ENCODE measurements at regions of chr14 and their contacts with region 1.

Region 1: GRCh38 chr14:70873627-70874026 is 33.6 kb upstream of the PCNX1 start:
- DNase-seq: peak; percentile 50 to 62 (median 59)
- H3K4me3 ChIP-seq: no peak overlapping the region
- H3K27ac ChIP-seq: no peak overlapping the region
- H3K4me1 ChIP-seq: peaks cover 0 to 2% (median 0%) of the 10 kb centered on the region in 4 experiments
- H3K27me3 ChIP-seq: no peaks in the 10 kb centered on the region

Region 2: DNA sequence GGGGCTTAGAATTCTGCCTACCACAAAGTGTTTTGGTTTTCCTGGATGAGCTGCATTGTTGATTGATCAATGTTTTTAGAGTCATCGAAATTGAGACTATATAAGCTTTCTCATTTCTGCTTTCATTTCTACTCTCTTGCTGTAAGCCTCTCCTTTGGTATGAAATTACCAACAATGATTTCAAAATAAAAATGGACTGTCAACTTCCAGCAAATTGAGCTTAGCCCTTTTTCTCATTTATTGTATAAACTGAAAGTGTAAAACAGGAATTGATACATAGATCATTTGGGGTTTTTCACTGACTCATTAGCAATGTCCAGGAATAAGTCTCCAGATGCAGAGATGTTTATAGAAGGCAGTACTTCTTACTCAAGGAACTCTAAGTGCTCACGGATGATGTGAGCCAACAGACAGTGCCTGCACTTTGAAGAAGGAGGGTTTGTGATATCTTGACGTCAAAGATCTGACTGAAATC is 13.6 kb after region 1 on chr14:
- CTCF ChIA-PET with region 1: interaction called, 46 read pairs
- POLR2A ChIA-PET with region 1: no interaction called
- DNase-seq: peak in 2 of 3 donors; percentile 27 to 41
- H3K4me3 ChIP-seq: peak overlapping the region in 6 of 7 experiments; percentile 19 to 65 (median 42)
- H3K27ac ChIP-seq: no peak overlapping the region
- H3K4me1 ChIP-seq: peaks cover 59 to 74% (median 69%) of the 10 kb centered on the region in 4 experiments
- H3K27me3 ChIP-seq: no peaks in the 10 kb centered on the region

Region 3: GRCh38 chr14:70907176-70907995 is 33.8 kb after region 1 on chr14 and contains the start of gene PCNX1:
- CTCF ChIA-PET with region 1: interaction called, 18 read pairs
- POLR2A ChIA-PET with region 1: interaction called, 3 read pairs
- DNase-seq: peak; percentile 86 to 94 (median 93)
- H3K4me3 ChIP-seq: peak within 1 kb of the TSS; percentile 83 to 97 (median 89)
- H3K27ac ChIP-seq: peak within 1 kb of the TSS; percentile 50 to 84
- H3K4me1 ChIP-seq: peaks cover 14 to 26% (median 20%) of the 10 kb centered on the region in 4 experiments
- H3K27me3 ChIP-seq: no peaks in the 10 kb centered on the region

Region 4: DNA sequence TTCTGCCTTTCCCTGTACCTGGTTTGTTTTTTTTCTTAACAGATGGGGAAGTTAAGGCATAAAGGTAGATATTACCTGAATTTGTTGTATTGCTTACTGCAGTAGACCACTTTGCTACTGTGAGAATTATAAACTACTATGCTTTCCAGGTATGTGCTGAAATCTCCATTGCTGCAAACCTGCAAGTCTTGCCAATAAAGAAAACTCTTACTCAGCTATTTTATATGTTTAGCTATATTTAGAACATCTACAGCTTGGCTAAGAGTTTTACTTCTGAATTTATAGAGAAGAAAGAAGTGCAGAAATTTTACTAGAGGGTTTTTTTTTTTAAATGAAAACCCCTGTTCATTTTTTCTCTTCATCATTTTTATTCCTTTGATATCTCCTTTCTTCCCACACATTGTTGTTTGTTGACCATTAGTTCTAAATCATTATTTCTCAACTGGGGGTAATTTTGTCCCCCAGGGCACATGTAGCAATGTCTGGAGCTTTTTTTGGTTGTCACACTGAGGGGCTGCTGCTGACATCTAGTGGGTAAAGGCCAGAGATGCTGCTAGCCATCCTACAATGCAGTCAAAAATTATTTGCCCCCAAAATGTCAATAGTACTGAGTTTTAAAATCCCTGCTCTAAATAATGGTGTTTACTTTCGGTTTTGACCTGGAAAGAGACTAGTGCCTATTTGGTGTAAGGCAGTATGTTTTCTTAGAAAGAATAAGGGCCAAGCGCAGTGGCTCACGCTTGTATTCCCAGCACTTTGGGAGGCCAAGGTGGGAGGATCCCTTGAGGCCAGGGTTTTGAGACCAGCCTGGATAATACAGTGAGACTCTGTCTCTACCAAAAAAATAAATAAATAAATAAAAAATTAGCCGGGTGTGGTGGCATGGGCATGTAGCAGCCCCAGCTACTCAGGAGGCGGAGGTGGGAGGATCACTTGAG is 82.2 kb after region 1 on chr14:
- CTCF ChIA-PET with region 1: interaction called, 44 read pairs
- POLR2A ChIA-PET with region 1: no interaction called
- DNase-seq: peak; percentile 48 to 69 (median 65)
- H3K4me3 ChIP-seq: no peak overlapping the region
- H3K27ac ChIP-seq: no peak overlapping the region
- H3K4me1 ChIP-seq: peaks cover 0 to 4% (median 1%) of the 10 kb centered on the region in 4 experiments
- H3K27me3 ChIP-seq: no peaks in the 10 kb centered on the region

Region 5: GRCh38 chr14:70972107-70972976 is 98.7 kb after region 1 on chr14:
- CTCF ChIA-PET with region 1: interaction called, 12 read pairs
- POLR2A ChIA-PET with region 1: no interaction called
- DNase-seq: peak; percentile 88 to 94 (median 89)
- H3K4me3 ChIP-seq: no peak overlapping the region
- H3K27ac ChIP-seq: no peak overlapping the region
- H3K4me1 ChIP-seq: peaks cover 0 to 9% (median 2%) of the 10 kb centered on the region in 4 experiments
- H3K27me3 ChIP-seq: no peaks in the 10 kb centered on the region